T-cell (primary cell): ENCODE measurements at regions of chr18 and their contacts with region 1.

Region 1: GRCh38 chr18:36284671-36285295 is 12.7 kb upstream of the FHOD3 start:
- DNase-seq: peak in 24 of 35 experiments; percentile 8 to 79 (median 28)
- ATAC-seq: peak in 3 of 4 experiments; percentile 48 to 62 (median 48)
- H3K4me3 ChIP-seq: no peak overlapping the region
- H3K4me3 Mint-ChIP-seq: no peak overlapping the region
- H3K27ac ChIP-seq: no peak overlapping the region
- H3K27ac Mint-ChIP-seq: no peak overlapping the region
- H3K4me1 ChIP-seq: no peaks in the 10 kb centered on the region
- H3K4me1 Mint-ChIP-seq: peaks cover 2 to 5% (median 2%) of the 10 kb centered on the region in 3 donors
- H3K27me3 ChIP-seq: peaks cover 0 to 18% of the 10 kb centered on the region in 2 experiments
- H3K27me3 Mint-ChIP-seq: peaks cover 18 to 23% of the 10 kb centered on the region in 2 donors

Region 2: GRCh38 chr18:35756506-35757117 is 528.2 kb before region 1 on chr18:
- CTCF ChIA-PET with region 1: interaction called, 3 to 13 read pairs
- POLR2A ChIA-PET with region 1: no interaction called
- DNase-seq: peak in 31 of 35 experiments; percentile 6 to 67 (median 29)
- ATAC-seq: peak in 2 of 4 experiments; percentile 54 to 58
- H3K4me3 ChIP-seq: no peak overlapping the region
- H3K4me3 Mint-ChIP-seq: no peak overlapping the region
- H3K27ac ChIP-seq: no peak overlapping the region
- H3K27ac Mint-ChIP-seq: no peak overlapping the region
- H3K4me1 ChIP-seq: no peaks in the 10 kb centered on the region
- H3K4me1 Mint-ChIP-seq: no peaks in the 10 kb centered on the region
- H3K27me3 ChIP-seq: peaks cover 0 to 18% of the 10 kb centered on the region in 2 experiments
- H3K27me3 Mint-ChIP-seq: peaks cover 33 to 34% of the 10 kb centered on the region in 2 donors

Region 3: GRCh38 chr18:36015629-36016028 is 269.2 kb before region 1 on chr18:
- CTCF ChIA-PET with region 1: interaction called, 19 to 88 read pairs
- POLR2A ChIA-PET with region 1: no interaction called
- DNase-seq: no peak
- ATAC-seq: no peak
- H3K4me3 ChIP-seq: no peak overlapping the region
- H3K4me3 Mint-ChIP-seq: no peak overlapping the region
- H3K27ac ChIP-seq: no peak overlapping the region
- H3K27ac Mint-ChIP-seq: no peak overlapping the region
- H3K4me1 ChIP-seq: no peaks in the 10 kb centered on the region
- H3K4me1 Mint-ChIP-seq: peaks cover 0 to 4% (median 4%) of the 10 kb centered on the region in 3 donors
- H3K27me3 ChIP-seq: no peaks in the 10 kb centered on the region
- H3K27me3 Mint-ChIP-seq: no peaks in the 10 kb centered on the region

Region 4: DNA sequence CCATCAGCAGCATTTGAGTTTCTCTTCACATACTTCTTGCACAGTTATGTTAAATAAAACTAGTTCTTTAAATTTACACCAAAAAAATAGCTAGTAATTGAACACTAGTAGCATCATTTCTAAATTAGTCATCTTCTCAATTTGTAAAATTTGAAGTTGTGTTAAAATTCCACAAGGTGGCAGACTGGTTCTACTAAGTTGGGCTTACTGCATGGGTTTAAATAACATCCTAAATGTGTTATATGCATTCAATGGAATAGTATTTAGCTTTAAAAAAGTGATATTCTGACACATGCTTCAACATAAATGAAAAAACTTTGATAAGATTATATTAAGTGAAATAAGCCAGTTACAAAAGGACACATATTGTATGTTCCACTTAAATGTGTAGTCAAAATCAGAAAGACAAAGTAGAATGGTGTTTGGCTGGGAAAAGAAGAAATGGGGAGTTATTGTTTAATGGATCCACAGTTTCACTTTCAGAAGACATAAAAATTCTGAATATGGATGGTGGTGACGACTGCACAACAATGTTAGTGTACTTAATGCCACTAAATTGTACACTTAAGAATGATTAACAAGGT is 188.8 kb before region 1 on chr18:
- CTCF ChIA-PET with region 1: interaction called, 34 to 42 read pairs
- POLR2A ChIA-PET with region 1: no interaction called
- DNase-seq: peak in 1 of 35 experiments; percentile 69
- ATAC-seq: peak in 2 of 4 experiments; percentile 42 to 50
- H3K4me3 ChIP-seq: no peak overlapping the region
- H3K4me3 Mint-ChIP-seq: no peak overlapping the region
- H3K27ac ChIP-seq: no peak overlapping the region
- H3K27ac Mint-ChIP-seq: no peak overlapping the region
- H3K4me1 ChIP-seq: no peaks in the 10 kb centered on the region
- H3K4me1 Mint-ChIP-seq: peaks cover 8 to 12% (median 11%) of the 10 kb centered on the region in 3 donors
- H3K27me3 ChIP-seq: no peaks in the 10 kb centered on the region
- H3K27me3 Mint-ChIP-seq: peaks cover 7 to 10% of the 10 kb centered on the region in 2 donors

Region 5: GRCh38 chr18:36274083-36274715 is 10.6 kb before region 1 on chr18:
- CTCF ChIA-PET with region 1: interaction called, 5 to 11 read pairs
- POLR2A ChIA-PET with region 1: no interaction called
- DNase-seq: no peak
- ATAC-seq: no peak
- H3K4me3 ChIP-seq: no peak overlapping the region
- H3K4me3 Mint-ChIP-seq: no peak overlapping the region
- H3K27ac ChIP-seq: no peak overlapping the region
- H3K27ac Mint-ChIP-seq: no peak overlapping the region
- H3K4me1 ChIP-seq: no peaks in the 10 kb centered on the region
- H3K4me1 Mint-ChIP-seq: no peaks in the 10 kb centered on the region
- H3K27me3 ChIP-seq: peaks cover 0 to 11% of the 10 kb centered on the region in 2 experiments
- H3K27me3 Mint-ChIP-seq: peaks cover 19 to 27% of the 10 kb centered on the region in 2 donors

Region 6: GRCh38 chr18:36580266-36580665 is 295.5 kb after region 1 on chr18:
- CTCF ChIA-PET with region 1: no interaction called
- POLR2A ChIA-PET with region 1: no interaction called
- DNase-seq: no peak
- ATAC-seq: no peak
- H3K4me3 ChIP-seq: no peak overlapping the region
- H3K4me3 Mint-ChIP-seq: no peak overlapping the region
- H3K27ac ChIP-seq: no peak overlapping the region
- H3K27ac Mint-ChIP-seq: no peak overlapping the region
- H3K4me1 ChIP-seq: no peaks in the 10 kb centered on the region
- H3K4me1 Mint-ChIP-seq: peaks cover 0 to 2% (median 0%) of the 10 kb centered on the region in 3 donors
- H3K27me3 ChIP-seq: peaks cover 0 to under 1% of the 10 kb centered on the region in 2 experiments
- H3K27me3 Mint-ChIP-seq: peaks cover 3 to 18% of the 10 kb centered on the region in 2 donors